ENCODE measurements at regions of chr17 and their contacts with region 1.

Region 1: DNA sequence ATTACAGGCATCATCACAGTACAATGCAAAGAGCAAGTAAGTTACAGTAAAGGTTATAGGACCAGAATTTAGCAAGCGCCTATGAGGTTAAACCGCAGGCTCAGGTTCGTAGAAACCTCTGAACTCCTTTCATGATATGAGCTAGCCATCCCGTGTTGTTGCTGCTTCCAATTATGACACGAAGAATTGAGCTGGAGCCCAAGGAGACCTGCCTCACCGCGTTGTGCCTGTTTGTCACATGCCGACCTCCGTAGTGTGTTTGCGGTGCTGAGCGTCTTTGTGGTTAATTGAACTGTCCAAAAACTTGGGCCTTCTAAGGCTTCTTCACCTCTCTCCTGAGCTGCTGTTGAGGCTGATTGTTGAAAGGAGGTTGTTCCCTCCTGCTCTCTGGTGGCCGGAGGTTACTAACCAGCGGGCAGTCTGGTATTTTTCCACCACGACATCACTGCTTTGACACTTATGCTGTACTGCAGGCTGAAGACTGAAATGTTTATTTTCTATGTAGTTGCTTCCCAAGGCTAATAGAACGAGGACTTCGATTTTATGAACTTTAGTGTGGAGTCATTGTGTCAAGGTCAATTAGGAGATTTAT is 67.5 kb downstream of the SEC14L1 start:
- DNase-seq: no peak
- ATAC-seq: peak; percentile 77 to 85 (median 81)
- H3K4me3 ChIP-seq: peak overlapping the region; percentile 8
- H3K27ac ChIP-seq: peak overlapping the region; percentile 80
- H3K4me1 ChIP-seq: peaks cover 39% of the 10 kb centered on the region
- H3K27me3 ChIP-seq: no peaks in the 10 kb centered on the region
- CTCF ChIP-seq: peak; percentile 37

Region 2: GRCh38 chr17:77140166-77140878 is 68.0 kb before region 1 on chr17:
- intact Hi-C with region 1: loop called (anchors 5 kb)
- DNase-seq: peak; percentile 99 to 100
- ATAC-seq: peak; percentile 94 to 98 (median 96)
- H3K4me3 ChIP-seq: peak overlapping the region; percentile 85
- H3K27ac ChIP-seq: peak overlapping the region; percentile 99
- H3K4me1 ChIP-seq: peaks cover 25% of the 10 kb centered on the region
- H3K27me3 ChIP-seq: no peaks in the 10 kb centered on the region
- CTCF ChIP-seq: no peak

Region 3: DNA sequence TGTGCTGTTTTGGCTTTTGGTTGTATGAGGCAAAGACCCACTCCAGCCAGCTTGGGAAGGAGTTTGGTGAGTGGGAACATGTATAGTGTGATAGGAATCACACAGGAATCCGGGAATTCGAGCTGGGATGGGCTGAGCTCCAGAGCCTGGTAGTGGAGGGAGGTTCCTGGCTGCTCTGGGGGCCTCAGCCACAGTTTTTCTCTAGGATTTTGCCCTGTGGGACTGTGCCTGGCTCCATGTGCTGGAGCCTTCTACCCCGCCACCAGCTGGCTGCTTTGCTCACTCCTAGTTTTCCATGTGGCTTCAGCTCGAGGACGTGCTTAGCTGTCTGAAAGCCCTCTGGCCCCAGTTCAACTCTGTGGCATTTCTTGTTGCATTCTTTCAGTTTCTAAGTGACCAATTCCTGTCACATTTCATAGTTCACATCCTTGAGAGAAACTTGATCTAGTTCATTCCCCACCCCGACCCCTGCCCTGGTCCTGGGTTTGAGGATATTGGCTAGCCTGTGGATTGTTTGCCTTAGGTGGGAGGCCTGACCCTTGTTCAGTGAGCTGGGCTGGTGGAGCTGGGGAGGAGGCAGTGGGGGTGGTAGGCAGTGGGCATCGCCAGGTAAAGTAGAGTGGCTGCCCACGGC is 62.6 kb before region 1 on chr17:
- intact Hi-C with region 1: loop called (anchors 5 kb)
- DNase-seq: peak; percentile 69 to 77
- ATAC-seq: peak; percentile 28 to 40 (median 36)
- H3K4me3 ChIP-seq: peak overlapping the region; percentile 54
- H3K27ac ChIP-seq: peak overlapping the region; percentile 99
- H3K4me1 ChIP-seq: peaks cover 64% of the 10 kb centered on the region
- H3K27me3 ChIP-seq: no peaks in the 10 kb centered on the region
- CTCF ChIP-seq: peak; percentile 14